A673 (cell line): ENCODE measurements at regions of chr19 and their contacts with region 1.

Region 1: DNA sequence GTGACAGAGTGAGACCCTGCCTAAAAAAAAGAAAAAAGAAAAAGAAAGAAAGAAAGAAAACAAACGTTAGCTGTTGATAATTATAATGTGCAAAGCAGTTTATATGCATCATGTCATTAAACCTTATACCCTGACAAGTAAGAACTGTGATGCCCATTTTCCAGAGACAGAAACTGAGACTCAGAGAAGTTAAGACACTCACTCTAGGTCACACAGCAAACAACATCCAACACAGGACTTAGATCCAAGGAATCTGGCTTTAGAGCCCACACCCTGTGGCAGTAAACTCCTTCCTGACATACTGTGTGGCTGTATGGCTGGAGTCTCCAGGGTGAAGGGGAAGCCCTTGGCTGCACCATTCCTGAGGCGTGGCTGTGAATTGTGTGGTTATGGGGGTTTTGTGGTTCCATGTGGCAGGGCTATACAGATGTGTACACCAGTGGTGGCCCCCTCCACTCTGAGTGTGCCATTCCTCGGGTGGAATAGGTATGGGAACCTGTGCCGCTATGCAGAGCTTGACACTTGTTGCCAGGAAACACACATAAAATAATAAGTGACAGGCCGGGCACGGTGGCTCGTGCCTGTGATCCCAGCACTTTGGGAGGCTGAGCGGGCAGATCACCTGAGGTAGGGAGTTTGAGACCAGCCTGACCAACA is 15.6 kb downstream of the AXL start:
- DNase-seq: no peak
- H3K4me3 ChIP-seq: no peak overlapping the region
- H3K27ac ChIP-seq: no peak overlapping the region
- H3K4me1 ChIP-seq: no peaks in the 10 kb centered on the region
- H3K27me3 ChIP-seq: no peaks in the 10 kb centered on the region
- CTCF ChIP-seq: no peak

Region 2: GRCh38 chr19:41186971-41187883 is 47.4 kb before region 1 on chr19:
- CTCF ChIA-PET with region 1: interaction called, 12 read pairs
- POLR2A ChIA-PET with region 1: no interaction called
- intact Hi-C with region 1: no loop called
- DNase-seq: no peak
- H3K4me3 ChIP-seq: no peak overlapping the region
- H3K27ac ChIP-seq: no peak overlapping the region
- H3K4me1 ChIP-seq: peaks cover 7% of the 10 kb centered on the region
- H3K27me3 ChIP-seq: peaks cover 25% of the 10 kb centered on the region
- CTCF ChIP-seq: no peak